MCF 10A (cell line): ENCODE measurements at regions of chr3 and their contacts with region 1.

Region 1: GRCh38 chr3:169604568-169604967 is 58.9 kb downstream of the MECOM start:
- DNase-seq: peak; percentile 25
- H3K4me3 Mint-ChIP-seq: no peak overlapping the region
- H3K27ac Mint-ChIP-seq: no peak overlapping the region
- H3K4me1 Mint-ChIP-seq: no peaks in the 10 kb centered on the region
- H3K27me3 Mint-ChIP-seq: no peaks in the 10 kb centered on the region
- CTCF ChIP-seq: peak; percentile 18

Region 2: DNA sequence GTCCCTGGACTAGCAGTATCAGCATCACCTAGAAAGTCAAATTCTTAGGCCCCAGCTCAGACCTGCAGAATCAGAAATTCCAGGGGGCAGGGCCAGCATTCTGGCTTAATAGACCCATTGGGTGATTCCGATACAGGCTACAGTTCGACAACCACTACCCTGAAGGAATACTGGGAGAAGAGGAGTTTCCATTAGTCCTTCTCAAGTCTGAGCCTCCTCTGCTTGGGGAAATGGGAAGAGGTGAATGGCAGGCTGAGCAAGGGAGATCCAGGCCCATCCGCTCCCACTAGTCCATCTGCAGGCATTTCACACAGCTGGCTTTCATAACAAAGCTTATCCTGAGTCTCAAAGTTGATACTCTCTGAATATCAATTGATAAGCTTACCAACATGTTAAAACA is 10.2 kb before region 1 on chr3:
- CTCF ChIA-PET with region 1: interaction called, 14 read pairs
- POLR2A ChIA-PET with region 1: no interaction called
- intact Hi-C with region 1: no loop called
- DNase-seq: no peak
- H3K4me3 Mint-ChIP-seq: no peak overlapping the region
- H3K27ac Mint-ChIP-seq: no peak overlapping the region
- H3K4me1 Mint-ChIP-seq: peaks cover 8% of the 10 kb centered on the region
- H3K27me3 Mint-ChIP-seq: no peaks in the 10 kb centered on the region
- CTCF ChIP-seq: no peak

Region 3: GRCh38 chr3:169813757-169814517 is 209.4 kb after region 1 on chr3:
- CTCF ChIA-PET with region 1: no interaction called
- POLR2A ChIA-PET with region 1: no interaction called
- intact Hi-C with region 1: no loop called
- DNase-seq: peak; percentile 7
- H3K4me3 Mint-ChIP-seq: peak overlapping the region; percentile 43
- H3K27ac Mint-ChIP-seq: no peak overlapping the region
- H3K4me1 Mint-ChIP-seq: peaks cover 6% of the 10 kb centered on the region
- H3K27me3 Mint-ChIP-seq: no peaks in the 10 kb centered on the region
- CTCF ChIP-seq: no peak